ENCODE measurements at regions of chr7 and their contacts with region 1.

Region 1: DNA sequence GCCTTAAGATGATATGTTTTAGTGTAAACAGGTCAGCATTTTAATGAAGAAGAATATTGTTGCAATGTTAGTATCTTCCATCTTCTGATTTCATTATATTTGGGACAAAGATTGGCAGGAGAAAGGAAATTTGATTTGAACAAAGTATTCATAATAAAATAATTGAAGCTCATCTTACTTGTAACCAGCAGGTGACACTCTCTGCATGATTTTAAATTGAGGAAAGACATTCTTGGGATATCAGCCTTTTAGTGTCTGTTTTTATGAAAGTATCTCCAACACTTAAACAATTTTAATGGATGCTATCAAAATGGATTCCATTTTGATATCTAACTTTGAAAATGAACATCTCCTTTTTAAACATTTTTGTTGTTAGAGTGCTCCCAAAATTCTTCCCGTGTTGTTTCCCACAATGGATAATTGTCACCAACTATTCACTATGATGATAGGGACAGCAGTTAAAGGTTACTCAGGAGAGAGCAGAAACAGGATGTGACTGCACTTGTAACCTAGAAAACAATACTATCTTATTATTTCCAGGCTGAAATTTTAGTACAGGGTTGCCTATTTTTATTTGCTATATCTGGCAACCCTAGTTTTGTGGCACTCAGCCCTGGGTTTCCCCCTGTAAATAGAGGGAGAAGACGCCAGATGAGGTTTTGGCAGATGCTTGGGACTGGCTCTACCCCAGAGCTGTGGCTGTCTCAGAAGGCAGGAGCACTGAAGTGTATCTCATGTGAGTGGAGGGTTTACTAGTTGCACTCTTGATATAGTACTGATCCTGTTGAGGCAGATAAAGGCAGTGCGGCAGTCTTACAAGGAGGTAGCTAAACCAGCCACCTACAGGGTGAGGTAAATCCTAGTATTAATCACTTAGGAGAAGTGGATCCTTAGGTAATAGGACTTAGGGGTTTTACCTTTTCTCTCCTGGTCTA is 31.0 kb upstream of the ABCB4 start:
- DNase-seq: no peak
- H3K4me3 Mint-ChIP-seq: no peak overlapping the region
- H3K27ac Mint-ChIP-seq: no peak overlapping the region
- H3K4me1 Mint-ChIP-seq: no peaks in the 10 kb centered on the region
- H3K27me3 Mint-ChIP-seq: no peaks in the 10 kb centered on the region

Region 2: GRCh38 chr7:87600130-87601124 is 93.9 kb after region 1 on chr7 and contains the start of gene ABCB1:
- CTCF ChIA-PET with region 1: no interaction called
- intact Hi-C with region 1: loop called (anchors 1 kb)
- DNase-seq: peak; percentile 73
- H3K4me3 Mint-ChIP-seq: peak within 1 kb of the TSS; percentile 84
- H3K27ac Mint-ChIP-seq: peak within 1 kb of the TSS; percentile 8
- H3K4me1 Mint-ChIP-seq: peaks cover 20% of the 10 kb centered on the region
- H3K27me3 Mint-ChIP-seq: peaks cover 5% of the 10 kb centered on the region
- total RNA-seq, gene ABCB1: 2.3 to 3.5 TPM

Region 3: GRCh38 chr7:87797798-87798403 is 291.4 kb after region 1 on chr7:
- CTCF ChIA-PET with region 1: no interaction called
- intact Hi-C with region 1: loop called (anchors 5 kb)
- DNase-seq: no peak
- H3K4me3 Mint-ChIP-seq: no peak overlapping the region
- H3K27ac Mint-ChIP-seq: no peak overlapping the region
- H3K4me1 Mint-ChIP-seq: no peaks in the 10 kb centered on the region
- H3K27me3 Mint-ChIP-seq: peaks cover under 1% of the 10 kb centered on the region

Region 4: GRCh38 chr7:88111136-88111743 is 604.7 kb after region 1 on chr7:
- CTCF ChIA-PET with region 1: no interaction called
- intact Hi-C with region 1: loop called (anchors 1 kb)
- DNase-seq: no peak
- H3K4me3 Mint-ChIP-seq: no peak overlapping the region
- H3K27ac Mint-ChIP-seq: no peak overlapping the region
- H3K4me1 Mint-ChIP-seq: peaks cover 4% of the 10 kb centered on the region
- H3K27me3 Mint-ChIP-seq: no peaks in the 10 kb centered on the region

Region 5: GRCh38 chr7:88219781-88220747 is 713.6 kb after region 1 on chr7 and contains the start of gene SRI:
- CTCF ChIA-PET with region 1: no interaction called
- intact Hi-C with region 1: loop called (anchors 5 kb)
- DNase-seq: peak; percentile 89
- H3K4me3 Mint-ChIP-seq: peak within 1 kb of the TSS; percentile 89
- H3K27ac Mint-ChIP-seq: peak within 1 kb of the TSS; percentile 88
- H3K4me1 Mint-ChIP-seq: peaks cover 23% of the 10 kb centered on the region
- H3K27me3 Mint-ChIP-seq: no peaks in the 10 kb centered on the region
- total RNA-seq, gene SRI: 152 to 168 TPM

Measured in activated naive CD4-positive, alpha-beta T cell treated with anti-CD3 and anti-CD28 coated beads for 36 hours (primary cell).